Sigmoid colon (tissue), 7 donors: ENCODE measurements at regions of chr5 and their contacts with region 1.

Region 1: GRCh38 chr5:140073296-140073695 is 30.2 kb upstream of the NRG2 start:
- DNase-seq: no peak
- H3K4me3 ChIP-seq: no peak overlapping the region
- H3K27ac ChIP-seq: no peak overlapping the region
- H3K4me1 ChIP-seq: peaks cover 0 to 4% (median 0%) of the 10 kb centered on the region in 4 donors
- H3K27me3 ChIP-seq: no peaks in the 10 kb centered on the region
- CTCF ChIP-seq: peak; percentile 49 to 67 (median 58)
- EP300 ChIP-seq: no peak
- POLR2A ChIP-seq: no peak

Region 2: DNA sequence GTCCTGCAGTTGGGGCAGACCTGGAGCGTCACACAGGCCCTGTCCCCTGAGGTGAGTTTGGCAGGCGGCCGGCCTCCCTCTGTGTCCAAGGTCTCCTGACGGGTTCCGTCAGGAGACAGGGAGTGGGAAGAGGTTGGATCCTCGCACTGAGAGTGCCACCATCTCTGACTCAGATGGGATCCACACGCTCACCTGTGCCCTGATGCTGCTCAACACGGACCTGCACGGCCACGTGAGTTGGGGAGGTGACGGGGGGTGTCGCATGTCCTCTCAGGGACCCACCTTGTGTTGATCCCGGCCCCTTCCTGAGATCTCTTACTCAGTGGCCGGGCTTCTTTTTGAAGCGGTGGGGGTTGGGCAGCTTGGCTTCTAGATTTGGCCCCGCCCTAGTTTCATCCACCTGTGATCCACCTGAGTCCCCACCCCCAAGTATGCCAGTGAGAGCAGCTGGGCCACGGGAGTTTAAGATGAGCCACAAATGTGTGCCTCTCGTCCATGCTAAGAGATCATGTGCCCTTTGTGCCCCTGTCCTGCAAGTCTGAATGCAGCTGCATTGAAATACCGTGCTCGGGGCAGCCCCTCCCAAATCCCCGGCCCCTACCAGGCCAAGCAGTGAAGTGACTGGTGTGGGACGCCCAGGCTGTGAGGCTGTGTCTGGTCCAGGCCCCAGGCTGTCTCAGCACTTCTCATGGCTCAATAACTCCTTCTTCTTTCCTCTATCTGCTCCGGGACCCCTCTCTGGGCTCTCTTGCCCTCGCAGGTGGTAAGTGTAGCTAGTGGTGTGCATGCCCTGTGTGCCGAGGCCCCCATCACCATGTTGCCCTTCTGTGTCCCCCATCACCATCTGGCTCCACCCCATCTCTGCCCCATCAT is 250.5 kb before region 1 on chr5:
- intact Hi-C with region 1: no loop called
- DNase-seq: peak; percentile 57
- H3K4me3 ChIP-seq: no peak overlapping the region
- H3K27ac ChIP-seq: no peak overlapping the region
- H3K4me1 ChIP-seq: no peaks in the 10 kb centered on the region
- H3K27me3 ChIP-seq: no peaks in the 10 kb centered on the region
- CTCF ChIP-seq: no peak
- EP300 ChIP-seq: no peak
- POLR2A ChIP-seq: no peak

Region 3: GRCh38 chr5:140094889-140095288 is 21.6 kb after region 1 on chr5:
- intact Hi-C with region 1: no loop called
- DNase-seq: no peak
- H3K4me3 ChIP-seq: no peak overlapping the region
- H3K27ac ChIP-seq: no peak overlapping the region
- H3K4me1 ChIP-seq: no peaks in the 10 kb centered on the region
- H3K27me3 ChIP-seq: no peaks in the 10 kb centered on the region
- CTCF ChIP-seq: no peak
- EP300 ChIP-seq: no peak
- POLR2A ChIP-seq: no peak

Region 4: DNA sequence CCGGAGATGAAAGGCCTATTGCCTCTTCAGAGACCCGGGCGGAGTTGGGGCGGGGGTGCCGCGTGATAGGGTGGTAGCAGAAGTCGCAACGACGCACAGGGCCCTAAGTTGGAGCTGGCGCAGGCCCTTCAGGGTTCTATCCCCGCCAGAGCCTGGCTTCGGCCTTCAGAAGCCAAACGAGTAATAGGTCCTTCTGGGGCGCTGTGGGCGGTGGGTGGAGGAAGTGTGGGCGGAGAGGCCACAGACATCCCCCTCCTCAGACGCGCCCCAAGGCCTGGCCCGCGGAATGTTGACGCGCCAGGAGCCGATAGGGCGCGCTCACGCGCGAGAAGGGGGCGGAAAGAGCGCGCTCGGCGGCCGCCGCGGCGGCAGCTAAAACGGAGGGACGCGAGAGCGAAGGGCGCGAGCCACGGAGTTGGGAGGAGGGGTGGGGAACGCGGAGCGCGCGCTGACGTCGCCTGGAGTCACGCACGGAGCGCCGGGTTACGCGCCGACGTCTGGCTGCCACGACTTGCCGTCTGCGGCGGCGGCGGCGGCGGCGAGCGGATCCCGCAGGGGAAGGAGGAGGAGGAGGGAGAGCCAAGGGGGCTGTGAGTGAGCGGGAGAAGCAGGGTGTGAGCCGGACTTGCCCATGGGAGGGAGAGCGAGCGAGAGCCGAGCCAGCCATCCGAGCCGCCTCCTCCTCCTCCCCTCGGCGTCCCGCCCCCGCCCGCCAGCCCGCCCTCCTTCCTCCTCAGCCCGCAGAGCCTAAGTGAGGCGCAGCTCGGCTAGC is 34.2 kb after region 1 on chr5:
- intact Hi-C with region 1: loop called (anchors 5 kb)
- DNase-seq: peak; percentile 96
- H3K4me3 ChIP-seq: peak overlapping the region; percentile 77 to 86 (median 80)
- H3K27ac ChIP-seq: peak overlapping the region; percentile 93 to 99 (median 96)
- H3K4me1 ChIP-seq: peaks cover 0 to 37% (median 25%) of the 10 kb centered on the region in 4 donors
- H3K27me3 ChIP-seq: no peaks in the 10 kb centered on the region
- CTCF ChIP-seq: no peak
- EP300 ChIP-seq: peak in 1 of 4 donors; percentile 34
- POLR2A ChIP-seq: peak in 1 of 2 donors; percentile 67

Region 5: DNA sequence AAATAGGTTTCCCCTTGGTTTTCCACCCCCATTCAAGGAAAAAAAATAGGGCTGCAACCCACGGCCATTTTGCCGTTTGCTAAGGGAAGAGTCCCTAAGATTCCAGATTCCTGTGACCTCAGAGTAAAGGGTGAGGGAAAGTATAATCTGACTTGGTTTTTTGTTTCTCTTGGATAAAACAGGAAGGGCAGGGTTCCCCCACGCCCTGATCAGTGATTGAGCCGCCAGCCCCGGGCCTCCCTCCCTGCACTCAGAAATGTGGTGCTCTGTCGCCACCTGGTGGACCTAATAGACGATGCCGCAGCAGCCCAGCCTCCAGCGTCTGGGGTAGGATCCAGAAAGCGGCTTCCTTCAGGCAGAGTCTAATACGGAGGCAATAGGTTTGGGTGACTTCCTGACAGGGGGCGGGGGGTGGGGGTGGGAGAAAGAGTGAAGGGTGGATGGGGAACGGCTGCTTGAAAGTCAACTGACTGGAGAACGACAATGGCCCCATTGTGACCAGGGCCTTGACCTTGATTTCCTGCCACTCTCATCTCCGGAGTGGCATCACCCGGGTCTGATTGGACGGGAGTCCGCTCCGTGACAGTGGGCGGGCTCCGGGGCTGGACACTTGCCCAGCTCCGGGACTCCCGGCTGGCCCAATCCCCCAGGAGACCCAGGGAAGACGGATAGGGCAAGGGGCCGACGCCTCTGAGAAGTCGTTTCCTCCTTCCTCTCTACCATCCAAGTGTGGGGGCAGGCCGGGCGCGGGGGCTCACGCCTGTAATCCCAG is 83.9 kb after region 1 on chr5:
- intact Hi-C with region 1: loop called (anchors 1 kb)
- DNase-seq: peak; percentile 93
- H3K4me3 ChIP-seq: peak overlapping the region; percentile 10 to 42 (median 35)
- H3K27ac ChIP-seq: peak overlapping the region; percentile 7 to 61 (median 27)
- H3K4me1 ChIP-seq: peaks cover 0 to 16% (median 7%) of the 10 kb centered on the region in 4 donors
- H3K27me3 ChIP-seq: no peaks in the 10 kb centered on the region
- CTCF ChIP-seq: peak; percentile 75 to 95 (median 90)
- EP300 ChIP-seq: no peak
- POLR2A ChIP-seq: no peak

Region 6: DNA sequence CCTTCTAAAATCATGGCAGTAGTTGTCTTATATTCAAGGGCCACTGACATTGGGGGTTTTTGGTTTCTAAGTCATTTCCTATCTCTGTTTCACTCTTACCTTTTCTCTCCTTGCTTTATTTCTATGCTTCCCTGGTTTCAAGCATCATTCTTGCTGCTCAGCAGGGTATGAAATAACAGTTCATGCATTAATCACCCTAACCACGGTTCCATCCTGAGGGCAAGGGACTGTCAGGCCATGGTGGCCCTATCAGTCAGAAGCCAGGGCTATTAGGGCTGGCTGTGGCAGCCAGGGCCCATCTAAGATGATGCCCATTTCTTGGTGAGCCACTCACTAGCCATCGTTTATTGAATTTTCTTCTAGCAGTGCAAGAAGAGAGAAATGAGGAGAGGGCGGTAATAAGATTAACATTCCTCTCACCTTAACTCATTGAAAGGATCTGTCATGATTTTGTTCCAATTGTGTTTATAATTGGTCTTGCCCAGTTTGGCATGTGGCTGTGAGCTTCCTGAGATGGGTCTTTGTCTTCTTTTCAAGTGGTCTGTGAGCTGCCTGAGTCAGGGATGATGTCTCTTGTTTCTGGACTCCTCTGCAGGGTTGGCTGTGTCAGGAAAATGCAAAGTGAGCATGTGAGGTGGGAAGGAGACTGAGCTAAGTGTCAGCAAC is 146.9 kb after region 1 on chr5:
- intact Hi-C with region 1: no loop called
- DNase-seq: no peak
- H3K4me3 ChIP-seq: no peak overlapping the region
- H3K27ac ChIP-seq: peak overlapping the region in 2 of 4 donors; percentile 8 to 67
- H3K4me1 ChIP-seq: peaks cover 0 to 36% (median 35%) of the 10 kb centered on the region in 4 donors
- H3K27me3 ChIP-seq: no peaks in the 10 kb centered on the region
- CTCF ChIP-seq: no peak
- EP300 ChIP-seq: no peak
- POLR2A ChIP-seq: no peak

Region 7: GRCh38 chr5:140346348-140347101 is 273.2 kb after region 1 on chr5 and contains the start of gene HBEGF:
- intact Hi-C with region 1: loop called (anchors 10 kb)
- DNase-seq: peak; percentile 88
- H3K4me3 ChIP-seq: peak within 1 kb of the TSS; percentile 54 to 78 (median 70)
- H3K27ac ChIP-seq: peak within 1 kb of the TSS; percentile 79 to 93 (median 86)
- H3K4me1 ChIP-seq: peaks cover 0 to 47% (median 36%) of the 10 kb centered on the region in 4 donors
- H3K27me3 ChIP-seq: no peaks in the 10 kb centered on the region
- CTCF ChIP-seq: peak in 2 of 4 experiments; percentile 25 to 27
- EP300 ChIP-seq: no peak
- POLR2A ChIP-seq: peak; percentile 68 to 75
- total RNA-seq, gene HBEGF: 4.7 to 17.6 (median 10.4) TPM

Region 8: GRCh38 chr5:140672455-140673186 is 599.3 kb after region 1 on chr5:
- intact Hi-C with region 1: no loop called
- DNase-seq: no peak
- H3K4me3 ChIP-seq: peak overlapping the region in 3 of 4 donors; percentile 19 to 22 (median 20)
- H3K27ac ChIP-seq: no peak overlapping the region
- H3K4me1 ChIP-seq: peaks cover 0 to 7% (median 2%) of the 10 kb centered on the region in 4 donors
- H3K27me3 ChIP-seq: no peaks in the 10 kb centered on the region
- CTCF ChIP-seq: no peak
- EP300 ChIP-seq: no peak
- POLR2A ChIP-seq: no peak